ENCODE measurements at regions of chr12 and their contacts with region 1.

Region 1: GRCh38 chr12:107685360-107686248 is at the start of gene PWP1:
- DNase-seq: peak; percentile 85 to 97 (median 92)

Region 2: DNA sequence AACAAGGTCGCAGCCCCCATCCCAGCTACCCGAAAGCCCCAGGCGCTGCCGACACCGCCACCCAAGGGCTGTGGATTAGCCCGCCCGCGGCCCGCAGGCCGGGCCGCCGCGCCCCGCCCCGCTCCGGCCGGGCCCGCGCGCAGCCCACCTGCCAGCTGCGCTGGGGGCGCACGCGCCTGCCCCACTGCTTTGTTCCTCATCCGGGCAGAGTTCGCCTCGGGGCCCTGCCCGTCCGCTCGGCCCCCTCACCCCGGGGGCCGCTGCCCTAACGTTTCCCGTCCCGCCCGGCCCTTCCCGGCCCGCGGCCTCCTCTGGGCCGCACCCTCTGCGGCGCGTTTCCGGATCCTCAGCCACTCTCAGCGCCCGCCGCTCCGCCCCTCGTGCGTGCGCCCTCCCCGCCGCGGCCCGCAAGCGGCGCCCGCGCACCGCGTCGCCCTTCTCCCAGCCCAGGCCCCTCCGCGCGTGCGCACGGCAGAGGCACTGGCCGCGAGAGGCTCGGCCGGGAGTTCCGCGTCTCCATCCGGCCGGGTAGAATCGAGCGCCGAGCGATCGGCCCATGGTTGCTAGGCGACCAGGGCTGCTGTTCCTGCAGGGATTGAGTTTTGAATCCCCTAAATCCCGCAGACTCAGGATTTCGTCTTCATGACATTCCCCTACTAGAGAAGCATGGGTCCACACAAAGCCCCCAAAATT is 75.4 kb after region 1 on chr12 and contains the start of gene PRDM4:
- intact Hi-C with region 1: loop called (anchors 2 kb)
- DNase-seq: peak; percentile 84 to 97 (median 93)

Region 3: GRCh38 chr12:108514973-108515814 is 829.6 kb after region 1 on chr12 and contains the start of gene FICD:
- intact Hi-C with region 1: loop called (anchors 5 kb)
- DNase-seq: peak; percentile 100

Measured in head of caudate nucleus (tissue), 42 donors.